Activated T-helper 1 cell treated with anti-CD3 and anti-CD28 coated beads, Interleukin-12 subunit alpha, Interleukin-12 subunit beta, Interleukin-2, Interleukin-4 antibody, amounts not matched to agents 30 ng/mL and 10 ng/mL and 1 ng/mL, durations not matched to agents 14 hours and 24 hours and 36 hours (primary cell): ENCODE measurements at regions of chr17 and their contacts with region 1.

Region 1: GRCh38 chr17:27805520-27806146 is 5.3 kb upstream of the NOS2 start:
- DNase-seq: peak; percentile 76
- H3K4me3 Mint-ChIP-seq: peak overlapping the region; percentile 65
- H3K27ac Mint-ChIP-seq: peak overlapping the region; percentile 91
- H3K4me1 Mint-ChIP-seq: peaks cover 40% of the 10 kb centered on the region
- H3K27me3 Mint-ChIP-seq: peaks cover 5% of the 10 kb centered on the region

Region 2: GRCh38 chr17:27345141-27345904 is 460.3 kb before region 1 on chr17:
- intact Hi-C with region 1: loop called (anchors 5 kb)
- DNase-seq: no peak
- H3K4me3 Mint-ChIP-seq: no peak overlapping the region
- H3K27ac Mint-ChIP-seq: no peak overlapping the region
- H3K4me1 Mint-ChIP-seq: peaks cover 7% of the 10 kb centered on the region
- H3K27me3 Mint-ChIP-seq: peaks cover 1% of the 10 kb centered on the region

Region 3: GRCh38 chr17:27760069-27760885 is 45.4 kb before region 1 on chr17:
- intact Hi-C with region 1: loop called (anchors 1 kb)
- DNase-seq: peak; percentile 48
- H3K4me3 Mint-ChIP-seq: no peak overlapping the region
- H3K27ac Mint-ChIP-seq: no peak overlapping the region
- H3K4me1 Mint-ChIP-seq: no peaks in the 10 kb centered on the region
- H3K27me3 Mint-ChIP-seq: no peaks in the 10 kb centered on the region

Region 4: GRCh38 chr17:27879987-27880608 is 74.5 kb after region 1 on chr17:
- intact Hi-C with region 1: loop called (anchors 1 kb)
- DNase-seq: peak; percentile 61
- H3K4me3 Mint-ChIP-seq: no peak overlapping the region
- H3K27ac Mint-ChIP-seq: no peak overlapping the region
- H3K4me1 Mint-ChIP-seq: peaks cover 26% of the 10 kb centered on the region
- H3K27me3 Mint-ChIP-seq: peaks cover 2% of the 10 kb centered on the region

Region 5: DNA sequence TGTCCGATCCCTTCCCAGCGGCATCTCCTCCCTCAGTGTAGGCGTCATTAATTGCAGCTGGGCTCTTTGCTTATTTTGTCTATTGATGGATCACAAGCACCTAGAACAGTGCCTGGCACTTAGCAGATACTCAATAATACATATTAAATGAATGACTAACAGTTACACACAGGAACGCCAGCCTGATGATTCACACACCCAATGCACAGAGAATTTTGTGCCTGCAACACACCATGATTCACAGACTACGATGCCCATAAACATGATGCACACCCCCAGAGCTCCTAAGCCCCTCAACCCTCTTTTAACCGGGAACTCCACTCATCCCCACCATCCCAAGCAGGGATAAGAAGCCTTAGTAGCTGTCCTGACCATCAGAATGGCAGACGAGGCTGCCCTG is 446.8 kb after region 1 on chr17:
- intact Hi-C with region 1: loop called (anchors 1 kb)
- DNase-seq: no peak
- H3K4me3 Mint-ChIP-seq: no peak overlapping the region
- H3K27ac Mint-ChIP-seq: no peak overlapping the region
- H3K4me1 Mint-ChIP-seq: peaks cover 8% of the 10 kb centered on the region
- H3K27me3 Mint-ChIP-seq: peaks cover 14% of the 10 kb centered on the region

Region 6: DNA sequence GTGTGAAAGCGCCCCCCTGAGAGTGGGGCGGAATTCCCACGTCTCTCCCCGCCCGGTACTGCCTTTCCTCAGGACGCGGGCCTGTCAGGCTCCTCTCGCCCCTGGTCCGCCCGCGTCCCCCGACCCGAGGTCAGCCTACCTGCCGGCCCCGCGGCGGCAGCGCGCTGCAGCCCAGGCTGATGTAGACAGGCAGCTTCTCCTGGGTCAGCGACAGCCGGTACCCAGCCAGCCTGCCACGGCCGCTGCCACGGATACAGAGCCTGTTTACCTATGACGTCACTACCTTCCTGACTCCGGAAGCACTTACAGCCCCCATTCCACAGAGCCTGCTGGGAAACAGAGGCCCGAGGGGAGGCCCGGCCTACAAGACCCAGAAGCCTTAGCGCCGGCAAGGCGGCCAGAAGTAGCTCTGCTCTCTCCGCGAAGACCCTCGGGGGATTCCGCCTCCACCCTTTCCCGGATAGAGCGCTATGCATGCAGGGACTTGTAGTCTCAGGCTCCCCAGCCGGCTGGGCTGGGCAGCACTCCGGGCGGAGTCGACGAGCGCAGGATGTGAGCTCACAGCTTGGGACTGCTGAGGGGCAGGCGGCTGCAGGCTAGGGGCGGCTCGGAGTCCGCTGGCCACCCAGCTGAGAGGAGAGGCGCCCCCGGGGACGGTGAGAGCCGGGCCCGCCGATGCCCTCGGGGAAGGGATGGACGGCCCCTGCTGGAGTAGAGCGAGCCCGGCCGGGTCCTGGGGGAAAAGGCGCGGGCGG is 529.7 kb after region 1 on chr17 and contains the starts of genes IFT20 and TNFAIP1:
- intact Hi-C with region 1: loop called (anchors 1 kb)
- DNase-seq: peak; percentile 98
- H3K4me3 Mint-ChIP-seq: peak within 1 kb of the TSS; percentile 99
- H3K27ac Mint-ChIP-seq: peak within 1 kb of the TSS; percentile 97
- H3K4me1 Mint-ChIP-seq: peaks cover 45% of the 10 kb centered on the region
- H3K27me3 Mint-ChIP-seq: no peaks in the 10 kb centered on the region
- total RNA-seq, gene IFT20: 21.3 and 25.8 TPM in 2 replicates
- total RNA-seq, gene TNFAIP1: 35.1 and 39.9 TPM in 2 replicates